WTC11 (cell line): ENCODE measurements at regions of chr11 and their contacts with region 1.

Region 1: GRCh38 chr11:119721129-119722120 is 7.6 kb downstream of the NECTIN1 start:
- DNase-seq: peak; percentile 77
- ATAC-seq: peak; percentile 79
- H3K4me3 Mint-ChIP-seq: no peak overlapping the region
- H3K27ac Mint-ChIP-seq: peak overlapping the region; percentile 23; the same call in 1 of the 2 replicates
- H3K4me1 Mint-ChIP-seq: peaks cover 92% of the 10 kb centered on the region
- H3K27me3 Mint-ChIP-seq: no peaks in the 10 kb centered on the region
- CTCF ChIP-seq: peak; percentile 56

Region 2: GRCh38 chr11:119572481-119573424 is 148.7 kb before region 1 on chr11:
- CTCF ChIA-PET with region 1: no interaction called
- POLR2A ChIA-PET with region 1: no interaction called
- DNase-seq: peak; percentile 36
- ATAC-seq: peak; percentile 68
- H3K4me3 Mint-ChIP-seq: no peak overlapping the region
- H3K27ac Mint-ChIP-seq: no peak overlapping the region
- H3K4me1 Mint-ChIP-seq: peaks cover 10% of the 10 kb centered on the region
- H3K27me3 Mint-ChIP-seq: peaks cover 6% of the 10 kb centered on the region
- CTCF ChIP-seq: no peak

Region 3: GRCh38 chr11:119666463-119667131 is 54.8 kb before region 1 on chr11:
- CTCF ChIA-PET with region 1: interaction called, 10 read pairs
- POLR2A ChIA-PET with region 1: no interaction called
- DNase-seq: peak; percentile 88
- ATAC-seq: peak; percentile 92
- H3K4me3 Mint-ChIP-seq: no peak overlapping the region
- H3K27ac Mint-ChIP-seq: peak overlapping the region; percentile 89
- H3K4me1 Mint-ChIP-seq: peaks cover 25% of the 10 kb centered on the region
- H3K27me3 Mint-ChIP-seq: no peaks in the 10 kb centered on the region
- CTCF ChIP-seq: peak; percentile 85

Region 4: DNA sequence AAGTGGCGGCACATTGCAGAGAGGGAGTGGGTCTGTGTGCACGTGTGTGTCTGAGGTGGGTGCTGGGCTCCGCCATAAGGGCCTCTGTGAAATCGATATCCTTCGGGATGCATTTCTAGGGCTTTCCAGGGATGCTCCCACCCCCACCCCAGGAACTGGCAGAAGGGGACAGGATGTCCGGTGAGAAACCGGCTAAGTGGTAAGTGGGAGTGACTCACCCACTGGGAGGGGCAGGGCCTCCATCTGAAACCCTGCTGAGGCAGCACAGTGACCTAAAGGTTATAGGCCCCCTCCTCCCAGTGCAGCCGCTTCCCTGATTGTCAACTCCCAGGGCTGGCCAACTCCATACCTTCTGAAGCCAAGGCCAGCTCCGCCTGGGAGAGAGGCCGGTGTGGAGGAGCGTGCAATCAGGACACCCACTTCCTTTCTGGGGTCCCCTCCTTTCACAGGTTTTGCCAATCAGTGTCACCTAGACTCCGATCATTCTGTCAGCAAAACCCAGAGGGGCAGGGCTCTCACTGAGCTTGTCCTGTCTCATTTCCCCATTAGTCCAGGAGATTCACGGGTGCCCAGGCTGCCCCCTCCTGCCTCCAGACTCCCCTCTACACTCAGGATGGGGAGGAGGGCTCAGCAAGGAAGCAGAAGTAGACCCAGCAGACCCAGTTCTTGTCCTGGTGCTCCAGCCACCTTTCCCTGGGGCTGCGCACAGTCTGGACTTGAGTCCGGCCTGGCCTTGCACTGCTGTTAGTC is 36.9 kb before region 1 on chr11:
- CTCF ChIA-PET with region 1: interaction called, 66 read pairs
- POLR2A ChIA-PET with region 1: no interaction called
- DNase-seq: no peak
- ATAC-seq: peak; percentile 18; the same call in 1 of the 2 replicates
- H3K4me3 Mint-ChIP-seq: no peak overlapping the region
- H3K27ac Mint-ChIP-seq: peak overlapping the region; percentile 23; the same call in 1 of the 2 replicates
- H3K4me1 Mint-ChIP-seq: peaks cover 61% of the 10 kb centered on the region
- H3K27me3 Mint-ChIP-seq: no peaks in the 10 kb centered on the region
- CTCF ChIP-seq: no peak

Region 5: GRCh38 chr11:119694334-119694733 is 27.1 kb before region 1 on chr11:
- CTCF ChIA-PET with region 1: interaction called, 66 read pairs
- POLR2A ChIA-PET with region 1: interaction called, 3 read pairs
- DNase-seq: no peak
- ATAC-seq: no peak
- H3K4me3 Mint-ChIP-seq: no peak overlapping the region
- H3K27ac Mint-ChIP-seq: peak overlapping the region; percentile 19; the same call in 1 of the 2 replicates
- H3K4me1 Mint-ChIP-seq: peaks cover 76% of the 10 kb centered on the region
- H3K27me3 Mint-ChIP-seq: no peaks in the 10 kb centered on the region
- CTCF ChIP-seq: no peak

Region 6: GRCh38 chr11:119709638-119710346 is 11.6 kb before region 1 on chr11:
- CTCF ChIA-PET with region 1: interaction called, 43 read pairs
- POLR2A ChIA-PET with region 1: interaction called, 3 read pairs
- DNase-seq: peak; percentile 53
- ATAC-seq: peak; percentile 85
- H3K4me3 Mint-ChIP-seq: 0 out of 2 replicates have a peak overlapping the region, but pooled peaks have one; percentile 4
- H3K27ac Mint-ChIP-seq: no peak overlapping the region; the same call in 1 of the 2 replicates
- H3K4me1 Mint-ChIP-seq: peaks cover 69% of the 10 kb centered on the region
- H3K27me3 Mint-ChIP-seq: no peaks in the 10 kb centered on the region; the same call in 1 of the 2 replicates
- CTCF ChIP-seq: no peak

Region 7: DNA sequence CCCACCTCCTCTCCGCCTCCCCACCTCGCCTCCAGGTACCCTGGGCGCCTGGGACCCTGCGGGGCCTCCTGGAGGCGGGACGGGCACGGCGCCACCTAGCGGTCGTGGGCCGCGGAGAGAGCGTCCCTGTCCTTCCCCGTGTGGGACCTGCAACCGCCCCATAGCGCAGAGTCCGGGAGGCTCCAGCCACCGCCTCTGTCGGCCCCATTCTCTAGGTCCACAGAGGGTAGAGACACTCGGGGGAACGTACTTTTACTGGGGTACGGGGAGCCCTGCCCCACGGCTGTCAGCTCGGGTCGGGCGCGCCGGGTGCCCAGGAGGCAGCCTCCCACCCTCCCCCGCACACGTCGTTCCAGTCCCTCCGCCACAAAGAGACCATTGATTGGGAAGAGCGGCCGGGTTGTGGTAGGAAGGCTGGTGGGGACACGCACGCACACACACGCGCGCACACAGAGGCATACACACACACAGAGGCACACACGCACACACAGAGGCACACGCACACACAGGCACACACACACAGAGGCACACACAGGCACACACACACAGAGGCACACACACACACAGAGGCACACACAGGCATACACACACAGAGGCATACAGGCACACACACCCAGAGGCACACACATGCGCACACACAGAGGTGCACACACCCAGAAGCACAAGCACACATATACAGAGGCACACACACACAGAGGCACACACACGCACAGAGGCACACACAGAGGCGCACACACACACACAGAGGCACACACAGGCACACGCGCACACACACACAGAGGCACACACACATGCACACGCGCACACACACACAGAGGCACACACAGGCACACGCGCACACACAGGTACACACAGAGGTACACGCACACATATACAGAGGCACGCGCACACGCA is 20.2 kb after region 1 on chr11:
- CTCF ChIA-PET with region 1: interaction called, 13 read pairs
- POLR2A ChIA-PET with region 1: no interaction called
- DNase-seq: peak; percentile 82
- ATAC-seq: peak; percentile 75
- H3K4me3 Mint-ChIP-seq: peak overlapping the region; percentile 62
- H3K27ac Mint-ChIP-seq: no peak overlapping the region
- H3K4me1 Mint-ChIP-seq: peaks cover 14% of the 10 kb centered on the region
- H3K27me3 Mint-ChIP-seq: peaks cover 33% of the 10 kb centered on the region
- CTCF ChIP-seq: peak; percentile 88

Region 8: GRCh38 chr11:119791701-119792151 is 70.3 kb after region 1 on chr11:
- CTCF ChIA-PET with region 1: interaction called, 10 read pairs
- POLR2A ChIA-PET with region 1: no interaction called
- DNase-seq: no peak
- ATAC-seq: peak; percentile 25; the same call in 1 of the 2 replicates
- H3K4me3 Mint-ChIP-seq: no peak overlapping the region
- H3K27ac Mint-ChIP-seq: no peak overlapping the region
- H3K4me1 Mint-ChIP-seq: peaks cover 61% of the 10 kb centered on the region
- H3K27me3 Mint-ChIP-seq: peaks cover 48% of the 10 kb centered on the region
- CTCF ChIP-seq: no peak

Region 9: GRCh38 chr11:119854521-119854920 is 133.1 kb after region 1 on chr11:
- CTCF ChIA-PET with region 1: no interaction called
- POLR2A ChIA-PET with region 1: no interaction called
- DNase-seq: no peak
- ATAC-seq: no peak
- H3K4me3 Mint-ChIP-seq: no peak overlapping the region
- H3K27ac Mint-ChIP-seq: no peak overlapping the region
- H3K4me1 Mint-ChIP-seq: peaks cover 6% of the 10 kb centered on the region
- H3K27me3 Mint-ChIP-seq: peaks cover 16% of the 10 kb centered on the region
- CTCF ChIP-seq: no peak